ENCODE measurements at regions of chr16 and their contacts with region 1.

Region 1: DNA sequence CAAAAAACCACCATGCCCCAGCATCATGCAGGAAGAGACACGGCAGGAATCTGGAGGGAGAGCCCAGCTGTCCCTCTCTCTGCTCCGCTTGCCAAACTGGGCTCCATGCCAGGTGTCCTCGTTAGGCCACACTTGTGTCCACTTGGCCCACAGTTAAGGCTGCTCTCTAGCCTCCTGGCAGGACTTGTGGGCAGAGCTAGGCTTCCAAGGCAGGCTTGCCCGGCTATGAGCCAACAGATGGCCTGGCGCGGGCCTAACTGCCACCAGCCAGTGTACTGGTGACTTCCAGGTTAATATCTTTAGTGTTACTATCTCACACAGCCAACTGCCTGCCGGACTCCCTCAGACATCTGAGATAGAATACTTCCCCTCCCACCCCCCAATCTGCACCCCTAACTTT is 10.6 kb downstream of the ATP6V0D1 start:
- DNase-seq: peak; percentile 86
- H3K4me3 ChIP-seq: no peak overlapping the region
- H3K27ac ChIP-seq: peak overlapping the region in 1 of 4 donors; percentile 18
- H3K4me1 ChIP-seq: peaks cover 0 to 29% (median 26%) of the 10 kb centered on the region in 4 donors
- H3K27me3 ChIP-seq: no peaks in the 10 kb centered on the region
- CTCF ChIP-seq: no peak
- EP300 ChIP-seq: no peak
- POLR2A ChIP-seq: no peak

Region 2: DNA sequence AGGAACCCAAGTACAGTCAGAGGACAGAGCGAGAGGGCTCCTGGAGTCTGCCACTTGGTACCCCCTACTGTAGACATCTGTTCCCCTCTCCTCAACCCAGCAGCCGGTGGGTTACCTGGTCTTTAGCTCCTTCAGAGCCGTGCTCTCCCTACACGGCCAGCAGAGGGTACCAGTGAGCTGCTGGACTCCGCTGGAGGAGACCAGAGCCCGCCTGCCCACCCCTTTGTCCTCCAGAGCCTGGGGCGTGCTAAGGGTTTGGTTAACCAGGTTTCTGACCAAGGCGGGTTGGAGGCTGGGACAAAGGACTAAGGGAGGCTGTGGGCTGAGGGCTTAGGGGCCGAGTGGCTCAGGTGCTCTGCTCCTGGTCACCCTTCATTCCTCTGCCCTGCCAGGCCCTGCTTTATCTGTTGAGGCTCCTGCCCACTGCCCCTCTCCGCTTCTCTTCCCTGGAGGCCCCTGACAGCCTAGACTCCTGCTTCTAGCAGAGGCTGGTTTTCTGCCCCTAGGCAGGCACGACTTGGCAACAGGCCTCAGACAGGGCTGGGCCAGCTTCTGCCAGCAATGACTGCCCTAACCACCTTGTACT is 42.1 kb before region 1 on chr16:
- intact Hi-C with region 1: loop called (anchors 1 kb)
- DNase-seq: peak; percentile 87
- H3K4me3 ChIP-seq: no peak overlapping the region
- H3K27ac ChIP-seq: no peak overlapping the region
- H3K4me1 ChIP-seq: peaks cover 0 to 27% (median 26%) of the 10 kb centered on the region in 4 donors
- H3K27me3 ChIP-seq: peaks cover 6 to 48% (median 11%) of the 10 kb centered on the region in 3 donors
- CTCF ChIP-seq: peak; percentile 76 to 88 (median 78)
- EP300 ChIP-seq: no peak
- POLR2A ChIP-seq: no peak

Region 3: DNA sequence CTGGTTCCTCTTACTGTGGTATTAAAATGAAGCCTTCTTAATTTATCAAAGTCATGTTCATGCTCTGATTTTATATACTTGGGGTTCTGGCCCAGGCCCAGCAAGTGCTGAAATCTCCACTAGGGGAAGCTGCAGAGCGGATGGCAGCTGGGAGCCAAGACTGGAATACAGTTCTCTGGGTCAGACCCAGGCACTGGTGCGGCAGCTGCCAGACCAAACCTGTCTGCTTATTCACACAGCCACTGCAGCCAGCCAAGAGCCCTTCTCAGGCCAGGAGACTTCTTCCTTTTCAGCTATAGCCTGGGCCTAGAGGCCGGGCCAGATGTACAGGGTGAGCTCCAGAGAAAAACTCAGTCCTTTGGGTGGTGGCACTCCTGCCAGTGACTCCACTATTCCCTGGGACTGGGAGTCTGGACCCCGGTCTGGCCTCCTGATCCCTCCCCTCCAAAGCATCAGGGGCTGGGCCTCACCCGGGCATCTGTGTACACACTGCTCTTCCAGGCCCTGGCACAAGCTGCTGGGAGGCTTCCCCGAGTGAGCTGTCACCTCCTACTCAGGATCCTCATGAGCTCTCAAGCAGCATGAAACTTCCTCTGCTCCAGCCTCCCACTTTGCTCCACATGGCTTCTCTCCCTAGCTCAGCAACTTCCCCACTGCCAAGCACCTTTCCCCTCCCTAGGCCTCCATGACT is 13.8 kb before region 1 on chr16:
- intact Hi-C with region 1: loop called (anchors 1 kb)
- DNase-seq: peak; percentile 95
- H3K4me3 ChIP-seq: no peak overlapping the region
- H3K27ac ChIP-seq: peak overlapping the region; percentile 60 to 82 (median 76)
- H3K4me1 ChIP-seq: peaks cover 0 to 63% (median 60%) of the 10 kb centered on the region in 4 donors
- H3K27me3 ChIP-seq: no peaks in the 10 kb centered on the region
- CTCF ChIP-seq: peak; percentile 41 to 79 (median 69)
- EP300 ChIP-seq: no peak
- POLR2A ChIP-seq: no peak

Region 4: DNA sequence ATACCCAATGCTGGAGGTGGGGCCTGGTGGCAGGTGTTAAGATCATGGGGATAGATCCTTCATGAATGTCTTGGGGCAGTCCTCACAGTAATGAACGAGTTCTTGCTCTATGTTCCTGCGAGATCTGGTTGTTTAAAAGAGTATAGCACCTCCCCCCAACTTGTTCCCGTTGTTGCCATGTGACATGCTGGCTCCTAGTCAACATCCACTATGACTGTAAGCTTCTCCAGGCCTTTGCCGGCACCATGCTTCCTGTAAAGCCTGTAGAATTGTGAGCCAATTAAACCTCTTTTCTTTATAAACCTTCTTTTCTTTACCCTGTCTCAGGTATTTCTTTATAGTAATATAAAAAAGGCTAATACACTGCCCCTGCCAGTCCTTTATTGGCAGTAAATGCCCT is 302.7 kb after region 1 on chr16:
- intact Hi-C with region 1: no loop called
- DNase-seq: peak; percentile 74
- H3K4me3 ChIP-seq: no peak overlapping the region
- H3K27ac ChIP-seq: peak overlapping the region; percentile 15 to 46 (median 42)
- H3K4me1 ChIP-seq: peaks cover 0 to 20% (median 20%) of the 10 kb centered on the region in 4 donors
- H3K27me3 ChIP-seq: no peaks in the 10 kb centered on the region
- CTCF ChIP-seq: no peak
- EP300 ChIP-seq: no peak
- POLR2A ChIP-seq: no peak